ENCODE measurements at regions of chr10 and their contacts with region 1.

Region 1: GRCh38 chr10:60572511-60573194 is 183.0 kb upstream of the ANK3 start:
- DNase-seq: peak; percentile 44
- H3K4me3 Mint-ChIP-seq: peak overlapping the region; percentile 84
- H3K27ac Mint-ChIP-seq: peak overlapping the region; percentile 94
- H3K4me1 Mint-ChIP-seq: peaks cover 53% of the 10 kb centered on the region
- H3K27me3 Mint-ChIP-seq: no peaks in the 10 kb centered on the region

Region 2: DNA sequence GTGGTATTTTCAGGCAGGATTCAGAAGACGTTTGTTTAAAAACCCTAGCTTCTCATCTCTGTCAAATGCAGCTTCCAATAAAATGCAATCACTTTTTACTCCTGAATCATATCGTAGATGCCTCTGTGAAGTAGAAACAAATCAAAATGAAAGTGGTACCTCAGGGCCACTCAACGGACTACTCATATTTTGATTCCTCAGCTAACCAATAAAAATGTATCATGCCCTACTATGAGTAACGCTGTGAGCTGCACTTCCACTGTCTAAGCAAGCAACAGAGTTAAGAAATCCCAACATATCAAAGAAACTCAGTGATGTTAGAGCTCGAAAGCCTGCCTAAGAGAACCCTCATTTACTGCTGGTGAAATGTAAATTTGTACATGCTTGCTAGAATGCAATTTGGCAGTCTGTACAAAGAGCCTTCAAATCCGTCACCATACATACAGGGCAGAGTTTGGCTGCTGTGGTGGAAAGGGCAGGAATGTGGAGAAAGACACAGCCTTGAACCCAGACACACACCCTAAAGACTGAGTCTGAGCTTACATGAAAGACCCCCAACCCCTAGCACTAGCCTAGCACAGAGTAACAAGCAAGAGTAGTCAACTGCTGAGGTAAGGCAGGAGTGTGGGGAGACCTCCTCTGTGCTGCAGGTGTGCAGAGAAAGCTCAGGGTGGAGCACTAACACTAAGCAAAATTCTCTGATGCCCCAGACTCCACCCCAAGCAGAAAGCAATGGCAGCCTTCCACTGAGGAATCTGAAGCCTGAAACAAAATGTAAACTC is 334.5 kb before region 1 on chr10:
- CTCF ChIA-PET with region 1: no interaction called
- intact Hi-C with region 1: loop called (anchors 1 kb)
- DNase-seq: peak; percentile 34
- H3K4me3 Mint-ChIP-seq: no peak overlapping the region
- H3K27ac Mint-ChIP-seq: peak overlapping the region; percentile 11
- H3K4me1 Mint-ChIP-seq: peaks cover 17% of the 10 kb centered on the region
- H3K27me3 Mint-ChIP-seq: no peaks in the 10 kb centered on the region

Region 3: DNA sequence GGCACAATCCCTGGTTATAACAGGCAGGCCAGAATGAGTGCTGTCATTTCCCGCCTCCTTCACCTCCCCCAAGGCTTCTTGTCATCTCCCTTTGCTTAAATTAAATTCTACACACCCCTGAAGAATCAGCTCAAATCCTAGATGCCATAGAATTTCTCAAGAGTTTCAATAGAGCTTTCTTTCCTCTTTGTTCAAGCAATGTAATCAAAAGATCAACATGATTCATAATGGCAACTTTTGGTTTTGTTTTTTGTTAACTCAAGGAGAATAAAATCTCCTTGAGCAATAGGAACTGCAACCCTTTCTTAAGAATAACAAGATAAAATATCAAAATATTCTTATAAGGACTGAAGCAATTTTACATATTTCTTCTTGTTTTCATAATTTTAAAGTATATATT is 24.9 kb after region 1 on chr10:
- CTCF ChIA-PET with region 1: no interaction called
- intact Hi-C with region 1: loop called (anchors 1 kb)
- DNase-seq: no peak
- H3K4me3 Mint-ChIP-seq: no peak overlapping the region
- H3K27ac Mint-ChIP-seq: no peak overlapping the region
- H3K4me1 Mint-ChIP-seq: peaks cover 19% of the 10 kb centered on the region
- H3K27me3 Mint-ChIP-seq: no peaks in the 10 kb centered on the region

Region 4: DNA sequence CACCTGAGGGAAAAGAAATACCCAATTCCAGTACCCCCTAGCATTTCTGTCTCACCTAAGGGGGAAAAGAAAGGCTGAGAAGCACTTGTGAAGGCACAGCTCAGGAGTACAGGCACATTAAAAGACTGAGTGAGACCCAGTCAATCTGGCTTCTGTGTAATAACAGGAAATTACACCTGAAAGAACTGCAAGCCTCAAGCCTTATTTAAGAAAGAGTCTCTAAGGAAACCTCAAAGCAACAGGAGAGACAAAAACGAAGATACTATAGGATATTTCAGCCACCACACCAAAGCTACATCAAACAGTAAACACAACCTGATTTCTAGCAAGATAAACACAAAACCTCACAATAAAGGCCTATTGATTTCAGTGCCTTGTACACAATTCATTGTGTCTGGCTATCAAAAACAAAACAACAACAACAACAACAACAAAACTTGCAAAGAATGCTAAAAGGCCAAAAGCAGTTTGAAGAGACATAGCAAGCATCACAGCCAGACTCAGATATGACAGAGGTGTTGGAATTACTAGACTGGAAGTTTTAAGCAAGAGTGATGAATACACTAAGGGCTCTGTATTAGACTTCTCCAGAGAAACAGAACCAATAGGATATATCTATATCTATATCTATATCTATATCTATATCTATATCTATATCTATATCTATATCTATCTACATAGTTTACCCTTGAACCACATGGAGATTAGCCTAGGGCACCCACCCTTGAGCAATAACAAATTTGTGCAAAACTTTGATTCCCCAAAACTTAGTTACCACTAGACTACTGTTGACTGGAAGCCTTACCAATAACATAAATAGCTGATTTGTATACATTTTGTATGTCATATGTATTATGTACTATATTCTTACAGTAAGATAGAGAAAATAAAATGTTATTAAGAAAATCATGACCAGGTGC is 136.3 kb after region 1 on chr10:
- CTCF ChIA-PET with region 1: no interaction called
- intact Hi-C with region 1: loop called (anchors 2 kb)
- DNase-seq: no peak
- H3K4me3 Mint-ChIP-seq: no peak overlapping the region
- H3K27ac Mint-ChIP-seq: peak overlapping the region; percentile 32
- H3K4me1 Mint-ChIP-seq: peaks cover 40% of the 10 kb centered on the region
- H3K27me3 Mint-ChIP-seq: no peaks in the 10 kb centered on the region

Region 5: DNA sequence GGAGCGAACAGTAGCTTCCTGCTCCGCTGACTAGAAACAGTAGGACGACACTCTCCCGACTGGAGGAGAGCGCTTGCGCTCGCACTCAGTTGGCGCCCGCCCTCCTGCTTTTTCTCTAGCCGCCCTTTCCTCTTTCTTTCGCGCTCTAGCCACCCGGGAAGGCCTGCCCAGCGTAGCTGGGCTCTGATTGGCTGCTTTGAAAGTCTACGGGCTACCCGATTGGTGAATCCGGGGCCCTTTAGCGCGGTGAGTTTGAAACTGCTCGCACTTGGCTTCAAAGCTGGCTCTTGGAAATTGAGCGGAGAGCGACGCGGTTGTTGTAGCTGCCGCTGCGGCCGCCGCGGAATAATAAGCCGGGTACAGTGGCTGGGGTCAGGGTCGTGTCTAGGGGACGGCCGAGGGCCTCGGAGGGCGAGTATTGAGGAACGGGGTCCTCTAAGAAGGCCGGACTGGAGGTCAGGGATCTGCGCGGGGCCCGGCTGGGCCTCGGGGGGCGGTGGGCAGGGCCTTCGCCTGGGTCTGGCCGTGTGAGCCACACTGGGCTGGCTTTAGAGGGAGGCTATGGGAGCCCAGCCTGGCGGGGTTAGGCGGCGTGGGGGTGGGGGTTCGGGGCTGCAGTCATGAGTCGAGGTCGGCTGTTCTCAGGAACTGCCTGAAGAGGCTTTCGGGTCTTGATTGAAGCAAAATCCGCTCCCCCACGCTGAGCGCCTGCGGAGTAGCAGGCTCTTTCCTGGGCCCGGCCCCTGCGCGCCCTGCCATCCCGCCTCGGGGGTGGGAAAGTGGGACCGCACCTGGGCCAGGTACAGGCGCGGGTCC is 205.8 kb after region 1 on chr10 and contains the start of gene CDK1:
- CTCF ChIA-PET with region 1: no interaction called
- intact Hi-C with region 1: loop called (anchors 2 kb)
- DNase-seq: peak; percentile 98
- H3K4me3 Mint-ChIP-seq: peak within 1 kb of the TSS; percentile 99
- H3K27ac Mint-ChIP-seq: peak within 1 kb of the TSS; percentile 97
- H3K4me1 Mint-ChIP-seq: peaks cover 21% of the 10 kb centered on the region
- H3K27me3 Mint-ChIP-seq: no peaks in the 10 kb centered on the region
- total RNA-seq, gene CDK1: 173 to 180 TPM

Measured in activated naive CD4-positive, alpha-beta T cell treated with anti-CD3 and anti-CD28 coated beads for 36 hours (primary cell).